MCF 10A (cell line): ENCODE measurements at regions of chr1 and their contacts with region 1.

Region 1: DNA sequence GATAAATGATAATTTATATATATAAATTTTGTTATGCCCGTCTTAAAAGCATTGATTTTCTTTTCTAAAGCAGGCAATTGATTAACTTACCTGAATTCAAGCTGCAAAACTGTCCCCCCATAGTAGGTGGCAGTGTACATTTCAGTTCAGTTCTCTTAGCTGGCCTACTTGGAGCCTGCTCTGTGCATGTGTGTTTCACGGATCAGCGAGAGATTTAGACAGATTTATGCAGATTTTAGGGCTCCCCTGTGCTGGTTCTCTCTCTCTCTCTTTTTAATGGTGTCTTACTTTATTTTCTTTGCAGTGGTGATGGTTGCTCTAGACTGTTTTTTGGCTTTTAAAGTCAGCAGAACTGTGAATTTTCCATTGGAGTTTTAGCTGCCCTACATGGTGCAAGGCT is 30.7 kb downstream of the CLIC4 start:
- DNase-seq: no peak
- H3K4me3 Mint-ChIP-seq: no peak overlapping the region
- H3K27ac Mint-ChIP-seq: peak overlapping the region; percentile 59
- H3K4me1 Mint-ChIP-seq: peaks cover 10% of the 10 kb centered on the region
- H3K27me3 Mint-ChIP-seq: no peaks in the 10 kb centered on the region
- CTCF ChIP-seq: no peak

Region 2: DNA sequence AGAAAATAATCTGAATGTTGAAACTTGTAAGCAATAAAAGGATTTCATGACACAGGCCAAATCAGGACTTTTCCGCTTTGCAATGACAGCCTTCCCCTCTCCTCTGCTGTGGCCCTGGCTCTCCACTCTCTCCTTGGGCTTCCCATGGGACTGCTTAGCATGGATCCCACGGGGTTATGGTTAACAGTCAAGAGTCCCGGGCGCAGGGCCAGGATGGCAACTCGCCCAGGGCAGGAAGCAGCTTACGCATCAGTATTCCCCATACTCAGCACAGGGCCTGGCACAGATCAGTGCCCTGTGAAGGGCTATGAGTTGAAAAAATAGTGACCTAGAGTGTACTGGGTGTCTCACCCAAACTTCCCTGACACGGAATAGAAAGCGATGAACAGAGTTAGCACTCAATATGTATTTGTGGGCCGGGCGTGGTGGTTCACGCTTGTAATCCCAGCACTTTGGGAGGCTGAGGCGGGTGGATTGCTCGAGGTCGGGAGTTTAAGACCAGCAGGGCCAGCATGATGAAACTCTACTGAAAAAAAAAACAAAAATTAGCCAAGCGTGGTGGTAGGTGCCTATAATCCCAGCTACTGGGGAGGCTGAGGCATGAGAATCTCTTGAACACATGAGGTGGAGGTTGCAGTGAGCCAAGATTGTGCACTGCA is 485.9 kb before region 1 on chr1:
- CTCF ChIA-PET with region 1: no interaction called
- POLR2A ChIA-PET with region 1: no interaction called
- intact Hi-C with region 1: no loop called
- DNase-seq: peak; percentile 99
- H3K4me3 Mint-ChIP-seq: peak overlapping the region; percentile 44
- H3K27ac Mint-ChIP-seq: peak overlapping the region; percentile 94
- H3K4me1 Mint-ChIP-seq: peaks cover 55% of the 10 kb centered on the region
- H3K27me3 Mint-ChIP-seq: no peaks in the 10 kb centered on the region
- CTCF ChIP-seq: no peak

Region 3: GRCh38 chr1:24391882-24392603 is 383.9 kb before region 1 on chr1:
- CTCF ChIA-PET with region 1: no interaction called
- POLR2A ChIA-PET with region 1: no interaction called
- intact Hi-C with region 1: no loop called
- DNase-seq: peak; percentile 71
- H3K4me3 Mint-ChIP-seq: peak overlapping the region; percentile 64
- H3K27ac Mint-ChIP-seq: peak overlapping the region; percentile 97
- H3K4me1 Mint-ChIP-seq: peaks cover 55% of the 10 kb centered on the region
- H3K27me3 Mint-ChIP-seq: no peaks in the 10 kb centered on the region
- CTCF ChIP-seq: peak; percentile 87

Region 4: DNA sequence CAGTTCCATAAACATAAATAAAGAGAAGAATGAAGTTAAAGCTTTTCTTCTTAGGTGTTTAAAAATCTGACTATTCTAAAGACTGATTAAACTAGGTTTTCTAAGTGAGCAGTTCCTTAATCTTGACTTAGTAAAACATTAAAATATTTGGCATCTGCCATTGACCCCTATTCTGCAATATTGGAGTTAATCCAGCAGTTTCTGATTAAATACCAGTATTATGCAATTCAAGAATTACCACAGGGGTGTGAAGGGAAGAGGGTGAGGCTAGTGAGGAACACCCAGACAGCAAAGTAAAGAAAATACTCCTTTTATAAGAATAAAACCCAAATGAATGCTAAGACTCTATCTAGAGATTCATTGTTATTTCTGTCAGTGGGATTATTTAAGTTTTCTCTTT is 10.3 kb after region 1 on chr1:
- CTCF ChIA-PET with region 1: interaction called, 3 read pairs
- POLR2A ChIA-PET with region 1: interaction called, 11 read pairs
- intact Hi-C with region 1: no loop called
- DNase-seq: peak; percentile 74
- H3K4me3 Mint-ChIP-seq: peak overlapping the region; percentile 38
- H3K27ac Mint-ChIP-seq: peak overlapping the region; percentile 39
- H3K4me1 Mint-ChIP-seq: peaks cover 11% of the 10 kb centered on the region
- H3K27me3 Mint-ChIP-seq: no peaks in the 10 kb centered on the region
- CTCF ChIP-seq: no peak